Activated CD4-positive, alpha-beta T cell treated with anti-CD3 and anti-CD28 coated beads for 36 hours (primary cell): ENCODE measurements at regions of chr1 and their contacts with region 1.

Region 1: GRCh38 chr1:161192476-161193465 is 6.1 kb downstream of the ADAMTS4 start:
- DNase-seq: peak; percentile 81
- ATAC-seq: peak; percentile 96
- H3K4me3 Mint-ChIP-seq: no peak overlapping the region
- H3K27ac Mint-ChIP-seq: peak overlapping the region; percentile 74
- H3K4me1 Mint-ChIP-seq: peaks cover 22% of the 10 kb centered on the region
- H3K27me3 Mint-ChIP-seq: no peaks in the 10 kb centered on the region

Region 2: GRCh38 chr1:161209790-161210409 is 17.1 kb after region 1 on chr1:
- CTCF ChIA-PET with region 1: interaction called, 12 read pairs
- POLR2A ChIA-PET with region 1: no interaction called
- intact Hi-C with region 1: no loop called
- DNase-seq: peak; percentile 85
- ATAC-seq: peak; percentile 97
- H3K4me3 Mint-ChIP-seq: no peak overlapping the region
- H3K27ac Mint-ChIP-seq: peak overlapping the region; percentile 78
- H3K4me1 Mint-ChIP-seq: peaks cover 26% of the 10 kb centered on the region
- H3K27me3 Mint-ChIP-seq: no peaks in the 10 kb centered on the region

Region 3: GRCh38 chr1:161292631-161293030 is 99.9 kb after region 1 on chr1:
- CTCF ChIA-PET with region 1: interaction called, 14 read pairs
- POLR2A ChIA-PET with region 1: no interaction called
- intact Hi-C with region 1: loop called in 1 of 2 experiments (anchors 1 kb)
- DNase-seq: no peak
- ATAC-seq: no peak
- H3K4me3 Mint-ChIP-seq: no peak overlapping the region
- H3K27ac Mint-ChIP-seq: no peak overlapping the region
- H3K4me1 Mint-ChIP-seq: no peaks in the 10 kb centered on the region
- H3K27me3 Mint-ChIP-seq: no peaks in the 10 kb centered on the region